Heart right ventricle (tissue), 16 donors: ENCODE measurements at regions of chr5 and their contacts with region 1.

Region 1: GRCh38 chr5:134586866-134587524 is 45.6 kb downstream of the SAR1B start:
- DNase-seq: peak; percentile 78 to 89
- ATAC-seq: peak; percentile 82 to 93 (median 88)
- H3K4me3 ChIP-seq: peak overlapping the region in 5 of 10 donors; percentile 7 to 31 (median 15)
- H3K27ac ChIP-seq: no peak overlapping the region
- H3K4me1 ChIP-seq: peaks cover 4 to 26% (median 16%) of the 10 kb centered on the region in 9 donors
- H3K27me3 ChIP-seq: no peaks in the 10 kb centered on the region
- CTCF ChIP-seq: peak; percentile 65 to 92 (median 81)

Region 2: GRCh38 chr5:134370871-134371833 is 215.8 kb before region 1 on chr5 and contains the start of gene UBE2B:
- intact Hi-C with region 1: loop called in 1 of 10 experiments (anchors 5 kb)
- DNase-seq: peak; percentile 95 to 99
- ATAC-seq: peak; percentile 91 to 97 (median 95)
- H3K4me3 ChIP-seq: peak within 1 kb of the TSS; percentile 64 to 97 (median 84)
- H3K27ac ChIP-seq: peak within 1 kb of the TSS; percentile 90 to 100 (median 98)
- H3K4me1 ChIP-seq: peaks cover 0 to 64% (median 51%) of the 10 kb centered on the region in 9 donors
- H3K27me3 ChIP-seq: no peaks in the 10 kb centered on the region
- CTCF ChIP-seq: no peak
- total RNA-seq, gene UBE2B: 195 to 260 (median 227) TPM